ENCODE measurements at regions of chr10 and their contacts with region 1.

Region 1: GRCh38 chr10:80459047-80459931 is 5.2 kb downstream of the TSPAN14 start:
- DNase-seq: peak; percentile 20 to 47
- ATAC-seq: no peak
- H3K4me3 ChIP-seq: peak overlapping the region; percentile 11 to 21 (median 17)
- H3K27ac ChIP-seq: peak overlapping the region; percentile 55 to 95 (median 88)
- H3K4me1 ChIP-seq: peaks cover 54 to 66% of the 10 kb centered on the region in 2 donors
- H3K27me3 ChIP-seq: no peaks in the 10 kb centered on the region
- CTCF ChIP-seq: no peak
- POLR2A ChIP-seq: peak in 1 of 2 donors; percentile 23

Region 2: DNA sequence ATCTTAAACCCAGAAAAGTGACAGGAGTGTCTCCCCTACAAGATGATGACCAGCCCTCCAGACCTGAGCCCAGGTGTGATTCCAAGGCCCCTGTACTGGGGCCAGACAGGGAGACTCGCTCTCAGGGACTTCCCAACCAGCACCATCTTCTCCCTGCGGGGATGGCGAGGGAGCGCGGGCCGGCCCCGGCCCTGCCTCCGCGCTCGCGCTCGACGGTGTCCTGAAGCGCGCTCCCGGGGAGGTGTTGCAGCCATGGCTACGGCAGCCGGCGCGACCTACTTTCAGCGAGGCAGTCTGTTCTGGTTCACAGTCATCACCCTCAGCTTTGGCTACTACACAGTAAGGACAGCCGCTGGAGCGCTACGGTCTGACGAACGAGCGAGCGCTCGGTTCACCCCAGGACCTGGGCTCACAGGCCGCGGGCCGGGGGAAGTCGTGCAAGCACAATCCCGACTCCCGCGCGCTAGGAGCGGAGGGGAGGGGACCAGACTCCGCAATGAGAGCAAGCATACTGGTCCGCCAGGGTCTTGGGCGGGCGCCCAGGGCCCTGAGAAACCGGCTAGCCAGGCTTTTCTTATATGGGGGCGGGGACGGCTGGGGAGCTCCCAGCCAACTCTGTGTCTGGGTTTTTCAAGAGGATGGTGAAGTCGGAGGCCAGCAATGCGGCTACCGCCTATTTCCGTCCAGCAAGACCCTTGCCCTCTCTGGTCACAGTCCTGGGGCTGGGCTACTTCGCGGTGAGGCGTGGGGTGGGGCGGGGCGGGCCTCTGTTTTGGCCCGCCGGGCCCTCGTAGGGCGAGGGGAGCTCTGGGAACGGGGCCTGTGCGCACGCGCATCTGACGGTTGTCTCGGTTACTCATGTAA is 380.6 kb before region 1 on chr10 and contains the start of gene TMEM254:
- in situ Hi-C with region 1: no loop called
- intact Hi-C with region 1: loop called (anchors 5 kb)
- DNase-seq: peak; percentile 74 to 84
- ATAC-seq: peak; percentile 91 to 95
- H3K4me3 ChIP-seq: peak within 1 kb of the TSS; percentile 59 to 99 (median 92)
- H3K27ac ChIP-seq: peak within 1 kb of the TSS; percentile 88 to 99 (median 95)
- H3K4me1 ChIP-seq: peaks cover 15 to 18% of the 10 kb centered on the region in 2 donors
- H3K27me3 ChIP-seq: no peaks in the 10 kb centered on the region
- CTCF ChIP-seq: no peak
- POLR2A ChIP-seq: peak; percentile 27 to 47
- total RNA-seq, gene TMEM254: 0.73 to 7.4 (median 4.8) TPM

Region 3: DNA sequence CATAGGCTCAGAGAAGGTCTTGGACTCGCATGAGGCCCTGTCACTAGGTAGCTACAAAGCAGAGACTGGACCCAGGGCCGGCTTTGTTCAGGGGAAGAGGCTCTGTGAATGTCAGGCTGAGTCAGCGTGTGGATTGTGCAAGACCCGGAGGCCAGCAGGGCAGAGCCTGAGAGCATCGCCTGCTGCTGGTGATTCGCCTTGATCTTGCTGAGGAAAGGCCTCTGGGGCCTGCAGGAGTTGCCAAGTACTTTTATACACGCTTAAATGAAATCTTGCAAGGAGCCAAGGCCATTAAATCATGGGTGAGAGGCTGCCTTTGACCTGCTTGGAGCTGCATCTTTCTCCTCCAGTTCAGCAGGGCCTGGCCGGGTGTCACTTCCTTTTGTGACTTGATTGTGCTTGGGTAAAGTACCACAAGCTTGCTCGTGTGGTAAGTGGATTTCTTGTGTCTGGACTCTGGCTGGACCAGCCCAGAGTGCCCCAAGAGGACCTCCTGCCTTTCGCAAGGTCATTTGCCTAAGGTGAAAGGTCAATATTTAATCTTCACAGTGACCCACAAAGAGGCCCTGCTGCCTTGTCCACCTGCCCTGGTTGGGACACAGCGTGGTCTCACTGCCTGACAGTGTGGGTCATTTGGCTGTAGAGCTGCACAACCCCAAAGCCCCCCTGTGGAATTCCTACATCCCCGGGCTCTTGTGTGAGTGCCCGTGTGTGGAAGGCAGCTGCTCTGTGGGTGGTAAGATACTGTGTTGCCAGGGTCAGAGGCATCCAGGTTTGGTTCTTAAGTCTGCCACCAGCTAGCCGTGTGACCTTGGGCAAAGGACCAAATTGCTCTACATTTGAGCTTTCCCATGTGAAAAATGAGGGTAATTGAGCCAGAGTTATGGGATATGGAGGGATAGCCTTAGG is 39.8 kb after region 1 on chr10:
- in situ Hi-C with region 1: loop called in 1 of 4 experiments (anchors 5 kb)
- intact Hi-C with region 1: loop called (anchors 2 kb)
- DNase-seq: peak; percentile 85 to 92
- ATAC-seq: peak; percentile 91 to 94
- H3K4me3 ChIP-seq: no peak overlapping the region
- H3K27ac ChIP-seq: peak overlapping the region; percentile 74 to 84 (median 80)
- H3K4me1 ChIP-seq: peaks cover 63 to 82% of the 10 kb centered on the region in 2 donors
- H3K27me3 ChIP-seq: no peaks in the 10 kb centered on the region
- CTCF ChIP-seq: peak in 1 of 5 experiments; percentile 11
- POLR2A ChIP-seq: no peak

Region 4: GRCh38 chr10:80567291-80567690 is 108.0 kb after region 1 on chr10:
- in situ Hi-C with region 1: no loop called
- intact Hi-C with region 1: no loop called
- DNase-seq: no peak
- ATAC-seq: no peak
- H3K4me3 ChIP-seq: no peak overlapping the region
- H3K27ac ChIP-seq: no peak overlapping the region
- H3K4me1 ChIP-seq: no peaks in the 10 kb centered on the region
- H3K27me3 ChIP-seq: no peaks in the 10 kb centered on the region
- CTCF ChIP-seq: no peak
- POLR2A ChIP-seq: no peak

Measured in gastrocnemius medialis (tissue), 4 donors.